Endothelial cell of umbilical vein (primary cell): ENCODE measurements at regions of chr14 and their contacts with region 1.

Region 1: GRCh38 chr14:74571901-74572725 is 39.9 kb downstream of the LTBP2 start:
- DNase-seq: peak; percentile 88
- H3K4me3 ChIP-seq: peak overlapping the region in 1 of 3 experiments; percentile 17
- H3K27ac ChIP-seq: peak overlapping the region; percentile 92
- H3K4me1 ChIP-seq: peaks cover 59% of the 10 kb centered on the region
- H3K27me3 ChIP-seq: no peaks in the 10 kb centered on the region
- CTCF ChIP-seq: no peak
- POLR2A ChIP-seq: peak; percentile 64

Region 2: DNA sequence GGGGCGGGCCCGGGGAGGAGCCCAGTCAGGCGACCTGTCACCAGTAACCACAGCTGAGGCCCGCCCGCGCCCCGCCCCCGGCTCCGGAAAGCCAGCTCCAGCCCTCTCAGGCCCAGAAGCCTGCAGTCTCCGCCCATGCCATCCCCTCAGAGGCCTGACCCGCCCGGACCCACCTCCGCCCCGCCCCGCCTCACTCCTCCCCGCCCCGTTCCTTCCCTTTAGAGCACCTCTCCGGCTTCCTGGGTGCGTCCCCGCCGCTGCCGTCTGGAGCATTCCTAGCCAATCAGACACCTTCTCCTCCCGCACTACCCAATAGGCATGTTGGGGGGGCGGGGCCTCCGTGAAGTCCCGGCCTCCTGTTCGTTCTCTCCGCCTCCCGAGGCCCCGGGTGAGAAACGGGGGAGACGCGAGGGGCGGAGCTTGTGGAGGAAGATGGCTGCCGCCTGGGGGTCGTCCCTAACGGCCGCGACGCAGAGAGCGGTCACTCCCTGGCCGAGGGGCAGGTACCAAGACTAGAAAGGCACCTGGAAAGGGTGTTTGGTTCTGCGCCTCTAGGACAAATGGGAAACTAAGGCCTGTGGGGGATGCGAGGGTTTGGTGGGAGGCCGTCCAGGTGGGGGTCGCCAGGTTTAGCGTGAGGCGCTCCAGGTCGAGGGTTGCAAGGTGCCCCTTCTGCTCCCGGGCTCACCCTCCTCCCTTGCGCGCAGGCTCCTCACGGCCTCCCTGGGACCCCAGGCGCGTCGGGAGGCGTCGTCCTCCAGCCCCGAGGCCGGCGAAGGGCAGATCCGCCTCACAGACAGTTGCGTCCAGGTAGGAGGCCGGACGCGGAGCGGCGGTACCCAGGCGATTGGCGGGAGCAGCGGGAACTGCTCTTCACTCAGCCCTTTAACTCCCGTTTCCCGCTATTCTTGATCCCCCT is 78.5 kb before region 1 on chr14 and contains the start of gene ISCA2:
- CTCF ChIA-PET with region 1: no interaction called
- POLR2A ChIA-PET with region 1: no interaction called
- dilution Hi-C with region 1: no loop called
- intact Hi-C with region 1: loop called (anchors 5 kb)
- DNase-seq: peak; percentile 99
- H3K4me3 ChIP-seq: peak within 1 kb of the TSS; percentile 91 to 98 (median 93)
- H3K27ac ChIP-seq: peak within 1 kb of the TSS; percentile 76
- H3K4me1 ChIP-seq: peaks cover 47% of the 10 kb centered on the region
- H3K27me3 ChIP-seq: no peaks in the 10 kb centered on the region
- CTCF ChIP-seq: no peak
- POLR2A ChIP-seq: no peak
- total RNA-seq, gene ISCA2: 21.7 and 22.6 TPM in 2 replicates

Region 3: DNA sequence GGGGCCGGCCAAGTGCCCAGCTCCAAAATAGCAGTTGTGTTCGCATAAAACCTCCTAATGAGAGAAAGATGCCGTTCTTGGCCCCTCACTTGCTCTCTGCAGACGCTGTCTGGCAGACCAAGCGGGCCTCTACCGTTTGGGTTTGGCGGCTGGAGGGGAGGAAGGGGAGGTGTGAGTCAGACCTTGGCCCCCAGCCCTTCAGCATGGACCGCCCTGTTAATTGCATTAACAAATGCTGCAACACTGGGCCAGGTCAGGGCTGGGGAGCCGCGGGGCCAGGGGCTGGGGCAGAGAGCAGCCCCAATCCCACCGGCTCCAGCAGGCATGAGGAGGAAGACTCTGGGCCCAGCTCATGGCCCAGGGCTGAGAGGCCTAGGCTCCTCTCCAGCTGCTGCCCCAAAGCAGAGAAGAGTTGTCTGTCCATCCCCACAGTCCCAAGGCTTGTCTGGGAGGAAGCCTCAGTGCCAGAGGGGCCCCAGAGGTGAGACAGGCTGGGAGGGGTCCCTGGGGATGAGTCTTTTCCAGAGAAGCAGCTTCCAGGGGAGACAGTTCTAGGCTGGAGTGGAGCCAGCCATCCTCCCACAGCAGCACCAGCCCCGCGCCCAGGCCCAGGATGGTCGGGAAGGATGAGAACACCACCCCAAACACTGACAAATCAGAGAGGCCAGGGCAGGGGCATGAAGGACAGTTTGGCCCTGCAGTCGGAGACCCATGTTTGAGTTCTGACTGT is 23.1 kb after region 1 on chr14:
- CTCF ChIA-PET with region 1: interaction called, 3 read pairs
- POLR2A ChIA-PET with region 1: no interaction called
- dilution Hi-C with region 1: no loop called
- intact Hi-C with region 1: loop called (anchors 1 kb)
- DNase-seq: peak; percentile 77
- H3K4me3 ChIP-seq: no peak overlapping the region
- H3K27ac ChIP-seq: peak overlapping the region; percentile 51
- H3K4me1 ChIP-seq: peaks cover 29% of the 10 kb centered on the region
- H3K27me3 ChIP-seq: no peaks in the 10 kb centered on the region
- CTCF ChIP-seq: no peak
- POLR2A ChIP-seq: no peak